Activated B cell treated with CpG ODN at 0.5 μM for 24 hours (primary cell): ENCODE measurements at regions of chr1 and their contacts with region 1.

Region 1: DNA sequence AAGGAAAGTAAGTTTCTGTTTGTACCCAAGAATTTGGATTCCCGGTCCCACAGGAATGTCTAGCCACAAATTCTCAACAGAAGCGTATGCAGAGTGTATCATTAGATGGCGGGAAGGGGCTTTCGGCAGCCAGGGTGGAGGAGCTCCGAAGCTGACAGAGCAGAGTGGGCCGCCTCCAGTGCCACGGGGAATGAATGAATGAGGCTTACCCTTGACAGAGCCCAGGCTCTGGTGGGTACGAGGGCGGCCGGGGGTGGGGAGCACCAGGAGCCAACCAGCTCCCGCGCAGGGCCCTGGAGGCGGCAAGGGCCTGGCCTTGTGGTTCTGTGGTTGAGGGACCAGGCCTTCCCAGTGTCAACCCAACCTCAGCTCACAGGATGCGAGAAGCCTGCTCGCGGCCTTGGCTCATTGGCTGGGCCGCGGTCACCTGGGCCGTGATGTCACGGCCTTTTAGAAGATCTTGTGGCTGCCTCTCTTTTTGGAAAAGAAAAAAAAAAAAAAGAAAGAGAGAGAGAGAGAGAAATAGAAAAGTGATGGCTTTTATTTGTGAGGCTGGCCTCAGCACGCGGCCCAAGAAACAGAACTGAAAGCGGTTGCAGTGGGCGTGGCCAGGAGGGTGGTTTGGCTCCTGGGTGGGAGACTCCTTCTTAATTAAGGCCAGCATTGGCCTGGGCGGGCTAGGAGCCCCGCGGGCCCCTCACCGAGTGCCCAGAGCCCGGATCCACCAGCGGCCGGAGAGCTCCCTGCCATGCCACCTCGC is 34.9 kb upstream of the RUNX3 start:
- DNase-seq: peak; percentile 67
- ATAC-seq: peak; percentile 84
- H3K4me3 Mint-ChIP-seq: peak overlapping the region; percentile 76
- H3K27ac Mint-ChIP-seq: peak overlapping the region; percentile 88
- H3K4me1 Mint-ChIP-seq: peaks cover 57% of the 10 kb centered on the region
- H3K27me3 Mint-ChIP-seq: no peaks in the 10 kb centered on the region
- CTCF ChIP-seq: no peak

Region 2: GRCh38 chr1:24987875-24988557 is 23.0 kb after region 1 on chr1:
- CTCF ChIA-PET with region 1: no interaction called
- POLR2A ChIA-PET with region 1: interaction called, 4 read pairs
- intact Hi-C with region 1: loop called (anchors 1 kb)
- DNase-seq: no peak
- ATAC-seq: peak; percentile 92
- H3K4me3 Mint-ChIP-seq: peak overlapping the region; percentile 61
- H3K27ac Mint-ChIP-seq: peak overlapping the region; percentile 85
- H3K4me1 Mint-ChIP-seq: peaks cover 34% of the 10 kb centered on the region
- H3K27me3 Mint-ChIP-seq: no peaks in the 10 kb centered on the region
- CTCF ChIP-seq: no peak

Region 3: GRCh38 chr1:25003457-25004190 is 38.6 kb after region 1 on chr1:
- CTCF ChIA-PET with region 1: no interaction called
- POLR2A ChIA-PET with region 1: interaction called, 5 read pairs
- intact Hi-C with region 1: loop called (anchors 5 kb)
- DNase-seq: no peak
- ATAC-seq: peak; percentile 18
- H3K4me3 Mint-ChIP-seq: no peak overlapping the region
- H3K27ac Mint-ChIP-seq: no peak overlapping the region
- H3K4me1 Mint-ChIP-seq: peaks cover 17% of the 10 kb centered on the region
- H3K27me3 Mint-ChIP-seq: no peaks in the 10 kb centered on the region
- CTCF ChIP-seq: no peak